Stomach (tissue), 19 donors: ENCODE measurements at regions of chr2 and their contacts with region 1.

Region 1: DNA sequence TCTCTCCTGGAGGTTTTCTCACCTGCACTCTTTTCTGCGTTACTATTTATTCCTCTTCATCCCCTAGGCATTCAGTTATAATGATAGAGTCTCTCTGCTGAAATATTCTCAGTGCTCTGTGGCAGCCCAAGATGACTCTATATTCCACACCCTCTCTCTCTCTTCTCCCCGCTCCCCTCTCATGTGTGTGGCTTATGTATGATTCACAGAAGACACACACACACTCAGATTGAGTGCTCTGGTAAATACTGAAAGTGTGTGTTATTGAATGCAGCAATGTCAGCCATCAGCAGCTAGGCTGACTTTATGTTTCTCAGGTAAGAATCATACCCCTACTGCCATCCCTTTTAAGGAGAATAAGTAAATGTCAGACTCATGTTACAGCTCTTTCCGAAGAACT is 201.2 kb downstream of the SLC4A10 start:
- DNase-seq: peak in 1 of 2 donors; percentile 6
- H3K4me3 ChIP-seq: no peak overlapping the region
- H3K27ac ChIP-seq: no peak overlapping the region
- H3K4me1 ChIP-seq: no peaks in the 10 kb centered on the region
- H3K27me3 ChIP-seq: no peaks in the 10 kb centered on the region
- CTCF ChIP-seq: no peak
- EP300 ChIP-seq: no peak
- POLR2A ChIP-seq: no peak

Region 2: DNA sequence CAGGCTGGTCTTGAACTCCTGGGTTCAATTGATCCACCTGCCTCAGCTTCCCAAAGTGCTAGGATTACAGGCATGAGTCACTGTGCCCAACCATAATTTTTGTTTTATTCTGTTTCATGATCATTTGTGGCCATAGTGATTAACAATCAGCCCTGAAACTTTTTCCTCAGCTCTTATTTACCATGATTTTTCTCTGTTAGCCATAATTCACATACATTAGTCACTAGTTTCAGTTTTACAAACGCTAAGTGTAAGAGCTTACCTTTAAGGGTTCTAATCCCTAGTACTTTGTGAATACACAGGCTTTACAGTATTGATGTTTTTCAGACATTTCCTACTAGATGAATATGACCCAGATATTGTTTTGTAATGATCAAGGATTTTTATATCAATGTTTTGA is 32.5 kb after region 1 on chr2:
- intact Hi-C with region 1: loop called (anchors 2 kb)
- DNase-seq: no peak
- H3K4me3 ChIP-seq: no peak overlapping the region
- H3K27ac ChIP-seq: no peak overlapping the region
- H3K4me1 ChIP-seq: no peaks in the 10 kb centered on the region
- H3K27me3 ChIP-seq: no peaks in the 10 kb centered on the region
- CTCF ChIP-seq: no peak
- EP300 ChIP-seq: no peak
- POLR2A ChIP-seq: no peak

Region 3: GRCh38 chr2:161965994-161966393 is 140.6 kb after region 1 on chr2:
- intact Hi-C with region 1: no loop called
- DNase-seq: no peak
- H3K4me3 ChIP-seq: no peak overlapping the region
- H3K27ac ChIP-seq: no peak overlapping the region
- H3K4me1 ChIP-seq: no peaks in the 10 kb centered on the region
- H3K27me3 ChIP-seq: no peaks in the 10 kb centered on the region
- CTCF ChIP-seq: no peak
- EP300 ChIP-seq: no peak
- POLR2A ChIP-seq: no peak